Activated CD4-positive, alpha-beta memory T cell treated with anti-CD3 and anti-CD28 coated beads for 36 hours (primary cell): ENCODE measurements at regions of chr11 and their contacts with region 1.

Region 1: GRCh38 chr11:11848891-11849746 is 7.3 kb downstream of the USP47 start:
- DNase-seq: peak; percentile 71
- H3K4me3 Mint-ChIP-seq: no peak overlapping the region
- H3K27ac Mint-ChIP-seq: no peak overlapping the region
- H3K4me1 Mint-ChIP-seq: peaks cover 76% of the 10 kb centered on the region
- H3K27me3 Mint-ChIP-seq: no peaks in the 10 kb centered on the region

Region 2: DNA sequence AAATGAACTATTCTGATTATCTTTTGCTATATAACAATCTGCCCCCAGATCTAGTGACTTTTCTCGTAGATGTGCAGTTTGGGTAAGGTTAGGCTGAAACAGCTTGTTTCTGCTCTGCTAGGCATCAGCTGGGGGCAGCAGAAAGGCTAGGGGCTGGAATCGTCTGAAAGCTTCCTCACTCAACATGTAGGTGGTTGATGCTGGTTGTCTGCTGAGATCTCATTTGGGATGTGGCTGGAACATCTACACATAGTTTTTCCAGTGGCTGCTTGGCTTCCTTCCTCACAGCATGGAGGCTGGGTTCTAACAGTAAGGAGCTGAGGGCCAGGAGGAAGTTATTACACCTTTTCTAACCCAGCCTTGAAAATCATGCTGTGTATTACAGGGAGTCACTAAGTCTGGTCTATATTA is 22.9 kb after region 1 on chr11:
- CTCF ChIA-PET with region 1: interaction called, 11 read pairs
- POLR2A ChIA-PET with region 1: interaction called, 4 read pairs
- intact Hi-C with region 1: no loop called
- DNase-seq: no peak
- H3K4me3 Mint-ChIP-seq: no peak overlapping the region
- H3K27ac Mint-ChIP-seq: no peak overlapping the region
- H3K4me1 Mint-ChIP-seq: peaks cover 57% of the 10 kb centered on the region
- H3K27me3 Mint-ChIP-seq: no peaks in the 10 kb centered on the region

Region 3: GRCh38 chr11:11895672-11896071 is 46.6 kb after region 1 on chr11:
- CTCF ChIA-PET with region 1: interaction called, 10 read pairs
- POLR2A ChIA-PET with region 1: no interaction called
- intact Hi-C with region 1: no loop called
- DNase-seq: no peak
- H3K4me3 Mint-ChIP-seq: no peak overlapping the region
- H3K27ac Mint-ChIP-seq: no peak overlapping the region
- H3K4me1 Mint-ChIP-seq: no peaks in the 10 kb centered on the region
- H3K27me3 Mint-ChIP-seq: no peaks in the 10 kb centered on the region

Region 4: DNA sequence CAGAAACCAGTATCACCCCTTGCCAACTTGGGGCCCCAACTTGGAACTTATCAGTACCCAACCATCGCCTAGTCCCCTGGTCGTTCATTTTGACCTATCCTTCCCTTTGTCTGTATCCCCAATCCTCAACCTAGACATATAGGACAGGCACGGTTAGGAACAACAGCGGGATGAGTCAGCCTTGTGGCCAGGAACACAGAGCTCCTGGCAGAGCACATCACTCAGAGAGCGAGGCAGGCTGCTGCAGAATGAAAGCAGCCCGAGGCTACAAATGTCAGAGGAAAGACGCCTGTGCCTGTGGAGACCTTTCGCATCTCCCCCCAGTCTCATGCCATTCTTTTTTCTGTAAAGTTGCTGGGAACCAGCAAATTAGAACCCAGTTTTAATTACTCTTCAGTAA is 144.7 kb after region 1 on chr11:
- CTCF ChIA-PET with region 1: no interaction called
- POLR2A ChIA-PET with region 1: no interaction called
- intact Hi-C with region 1: no loop called
- DNase-seq: no peak
- H3K4me3 Mint-ChIP-seq: no peak overlapping the region
- H3K27ac Mint-ChIP-seq: no peak overlapping the region
- H3K4me1 Mint-ChIP-seq: peaks cover 6% of the 10 kb centered on the region
- H3K27me3 Mint-ChIP-seq: peaks cover 19% of the 10 kb centered on the region

Region 5: DNA sequence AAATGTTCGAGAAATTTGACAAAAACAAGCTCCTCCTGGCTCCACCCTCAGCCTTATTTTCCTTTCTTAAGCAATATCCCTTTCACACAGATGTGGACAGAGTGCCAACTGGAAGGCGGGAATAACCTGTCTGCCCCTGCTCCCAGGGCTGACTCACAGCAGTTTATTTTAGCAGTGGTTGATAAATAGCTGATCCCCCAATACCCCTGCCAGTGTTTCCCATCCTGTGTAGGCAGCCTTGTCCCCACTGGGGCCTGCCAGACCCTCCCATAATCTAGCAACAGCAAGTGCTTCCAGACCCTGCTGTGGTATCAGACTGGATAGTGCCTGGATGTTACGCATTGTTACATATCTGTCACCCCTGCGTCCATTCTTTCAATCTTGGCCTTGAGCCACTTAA is 581.8 kb after region 1 on chr11:
- CTCF ChIA-PET with region 1: no interaction called
- POLR2A ChIA-PET with region 1: no interaction called
- intact Hi-C with region 1: no loop called
- DNase-seq: no peak
- H3K4me3 Mint-ChIP-seq: no peak overlapping the region
- H3K27ac Mint-ChIP-seq: no peak overlapping the region
- H3K4me1 Mint-ChIP-seq: no peaks in the 10 kb centered on the region
- H3K27me3 Mint-ChIP-seq: no peaks in the 10 kb centered on the region